Activated B cell treated with CpG ODN at 0.5 μM for 24 hours (primary cell): ENCODE measurements at regions of chr12 and their contacts with region 1.

Region 1: DNA sequence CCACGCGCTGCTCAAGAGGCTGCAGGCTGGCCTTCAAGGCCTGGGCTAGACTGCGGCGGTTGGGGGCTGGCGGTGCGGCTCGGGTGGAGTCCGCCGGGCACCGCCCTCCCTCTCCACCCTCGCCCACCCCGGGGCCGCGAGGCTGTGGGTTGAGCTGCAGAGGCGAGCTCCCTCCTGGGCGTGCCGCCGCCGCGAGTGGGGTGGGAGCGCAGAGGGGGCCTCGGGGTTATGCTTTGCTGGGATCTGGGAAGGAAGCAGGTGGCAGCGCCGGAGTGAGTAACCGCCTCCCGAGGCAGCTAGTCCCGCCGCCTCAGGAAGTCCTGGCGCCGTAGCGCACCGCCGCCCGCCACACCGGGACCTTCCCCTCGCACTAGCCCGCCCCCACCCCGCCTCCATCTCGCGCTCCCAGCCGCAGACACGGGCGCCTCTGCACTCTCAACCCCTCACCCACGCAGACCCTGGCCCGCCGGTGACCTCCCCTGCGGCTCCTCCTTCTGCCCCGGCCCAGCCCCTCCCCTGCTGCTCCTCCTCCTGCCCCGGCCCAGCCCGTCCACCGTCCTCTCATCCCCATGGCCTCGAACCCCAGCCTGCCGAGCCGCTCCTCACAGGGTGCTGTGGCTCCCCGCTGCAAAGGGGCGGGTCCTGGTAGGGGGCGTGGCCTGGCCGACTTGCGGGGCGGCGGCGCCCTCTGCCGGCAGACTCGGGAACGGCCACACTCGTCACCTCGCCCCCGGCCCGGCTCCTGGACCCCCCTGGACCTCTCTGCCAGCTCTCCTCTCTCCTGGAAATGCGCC is 16.6 kb downstream of the TAMALIN start:
- DNase-seq: peak; percentile 92
- ATAC-seq: peak; percentile 63
- H3K4me3 Mint-ChIP-seq: peak overlapping the region; percentile 81
- H3K27ac Mint-ChIP-seq: no peak overlapping the region
- H3K4me1 Mint-ChIP-seq: peaks cover 57% of the 10 kb centered on the region
- H3K27me3 Mint-ChIP-seq: no peaks in the 10 kb centered on the region
- CTCF ChIP-seq: peak; percentile 86

Region 2: DNA sequence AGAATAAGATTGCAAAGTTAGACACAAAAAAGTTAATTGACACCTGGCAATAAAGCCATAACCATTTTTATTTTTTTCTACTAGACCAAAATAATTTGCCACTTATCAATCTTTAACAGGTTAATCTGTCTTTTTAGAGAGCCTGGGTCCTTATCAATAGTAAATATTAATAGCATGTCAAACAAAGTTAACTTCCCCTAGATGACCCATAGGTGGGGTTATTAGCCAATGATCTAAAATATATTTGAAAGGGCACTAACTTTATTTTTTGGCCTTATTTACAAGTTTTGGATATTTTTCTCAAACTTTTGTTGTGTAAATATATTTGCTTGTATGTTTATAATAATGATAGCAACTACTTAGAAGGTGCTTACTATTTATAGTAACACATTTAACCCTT is 131.5 kb before region 1 on chr12:
- CTCF ChIA-PET with region 1: interaction called, 3 read pairs
- POLR2A ChIA-PET with region 1: no interaction called
- intact Hi-C with region 1: loop called (anchors 2 kb)
- DNase-seq: no peak
- ATAC-seq: no peak
- H3K4me3 Mint-ChIP-seq: no peak overlapping the region
- H3K27ac Mint-ChIP-seq: no peak overlapping the region
- H3K4me1 Mint-ChIP-seq: peaks cover 3% of the 10 kb centered on the region
- H3K27me3 Mint-ChIP-seq: peaks cover 13% of the 10 kb centered on the region
- CTCF ChIP-seq: no peak

Region 3: GRCh38 chr12:52004042-52004648 is 19.2 kb before region 1 on chr12:
- CTCF ChIA-PET with region 1: interaction called, 306 read pairs
- POLR2A ChIA-PET with region 1: interaction called, 217 read pairs
- intact Hi-C with region 1: loop called (anchors 1 kb)
- DNase-seq: no peak
- ATAC-seq: no peak
- H3K4me3 Mint-ChIP-seq: no peak overlapping the region
- H3K27ac Mint-ChIP-seq: no peak overlapping the region
- H3K4me1 Mint-ChIP-seq: peaks cover 39% of the 10 kb centered on the region
- H3K27me3 Mint-ChIP-seq: no peaks in the 10 kb centered on the region
- CTCF ChIP-seq: no peak

Region 4: DNA sequence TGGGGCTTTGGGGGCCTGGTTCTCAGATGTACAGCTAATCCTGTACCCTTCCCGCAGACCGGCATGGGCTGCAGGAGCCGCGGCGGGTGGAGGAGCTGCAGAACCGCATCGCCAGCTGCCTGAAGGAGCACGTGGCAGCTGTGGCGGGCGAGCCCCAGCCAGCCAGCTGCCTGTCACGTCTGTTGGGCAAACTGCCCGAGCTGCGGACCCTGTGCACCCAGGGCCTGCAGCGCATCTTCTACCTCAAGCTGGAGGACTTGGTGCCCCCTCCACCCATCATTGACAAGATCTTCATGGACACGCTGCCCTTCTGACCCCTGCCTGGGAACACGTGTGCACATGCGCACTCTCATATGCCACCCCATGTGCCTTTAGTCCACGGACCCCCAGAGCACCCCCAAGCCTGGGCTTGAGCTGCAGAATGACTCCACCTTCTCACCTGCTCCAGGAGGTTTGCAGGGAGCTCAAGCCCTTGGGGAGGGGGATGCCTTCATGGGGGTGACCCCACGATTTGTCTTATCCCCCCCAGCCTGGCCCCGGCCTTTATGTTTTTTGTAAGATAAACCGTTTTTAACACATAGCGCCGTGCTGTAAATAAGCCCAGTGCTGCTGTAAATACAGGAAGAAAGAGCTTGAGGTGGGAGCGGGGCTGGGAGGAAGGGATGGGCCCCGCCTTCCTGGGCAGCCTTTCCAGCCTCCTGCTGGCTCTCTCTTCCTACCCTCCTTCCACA is 35.4 kb after region 1 on chr12:
- CTCF ChIA-PET with region 1: interaction called, 16 read pairs
- POLR2A ChIA-PET with region 1: interaction called, 3 read pairs
- intact Hi-C with region 1: no loop called
- DNase-seq: no peak
- ATAC-seq: no peak
- H3K4me3 Mint-ChIP-seq: no peak overlapping the region
- H3K27ac Mint-ChIP-seq: no peak overlapping the region
- H3K4me1 Mint-ChIP-seq: peaks cover 2% of the 10 kb centered on the region
- H3K27me3 Mint-ChIP-seq: no peaks in the 10 kb centered on the region
- CTCF ChIP-seq: no peak

Region 5: DNA sequence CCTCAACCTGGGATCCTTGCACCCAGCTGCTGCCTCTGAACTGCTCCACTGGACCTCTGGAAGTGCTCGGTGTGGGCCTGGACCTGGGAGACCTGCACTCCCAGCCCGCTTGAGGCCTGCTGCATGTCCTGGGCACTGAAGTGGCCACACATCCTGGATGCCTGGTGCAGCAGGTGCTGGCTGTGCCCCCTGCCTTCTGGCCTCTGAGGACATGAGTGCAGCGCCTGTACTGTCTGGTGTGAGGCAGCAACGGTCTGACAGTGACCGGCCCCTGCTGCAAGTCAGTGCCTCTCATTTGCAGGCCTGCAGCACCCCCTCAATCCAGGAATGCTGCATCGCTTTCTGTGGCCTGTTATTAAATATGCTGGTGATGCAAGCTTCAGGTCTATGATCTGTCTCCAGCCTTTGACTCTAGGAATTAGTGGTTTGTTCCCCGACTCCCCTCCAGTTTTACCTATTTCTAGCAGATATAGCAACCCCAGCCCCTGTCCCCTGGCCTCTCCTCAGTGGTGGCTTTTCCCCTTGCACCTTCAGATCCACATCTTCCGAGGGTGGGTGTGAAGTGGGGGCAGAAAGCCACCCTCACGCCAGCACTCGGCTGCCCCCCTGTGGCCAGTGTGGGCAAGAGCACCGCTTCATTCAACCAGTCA is 59.7 kb after region 1 on chr12:
- CTCF ChIA-PET with region 1: interaction called, 342 read pairs
- POLR2A ChIA-PET with region 1: interaction called, 22 read pairs
- intact Hi-C with region 1: loop called (anchors 1 kb)
- DNase-seq: peak; percentile 70
- ATAC-seq: peak; percentile 63
- H3K4me3 Mint-ChIP-seq: peak overlapping the region; percentile 42
- H3K27ac Mint-ChIP-seq: peak overlapping the region; percentile 48
- H3K4me1 Mint-ChIP-seq: peaks cover 42% of the 10 kb centered on the region
- H3K27me3 Mint-ChIP-seq: peaks cover 8% of the 10 kb centered on the region
- CTCF ChIP-seq: peak; percentile 98

Region 6: GRCh38 chr12:52151859-52152783 is 128.7 kb after region 1 on chr12:
- CTCF ChIA-PET with region 1: no interaction called
- POLR2A ChIA-PET with region 1: no interaction called
- intact Hi-C with region 1: no loop called
- DNase-seq: peak; percentile 54
- ATAC-seq: peak; percentile 81
- H3K4me3 Mint-ChIP-seq: no peak overlapping the region
- H3K27ac Mint-ChIP-seq: no peak overlapping the region
- H3K4me1 Mint-ChIP-seq: peaks cover 6% of the 10 kb centered on the region
- H3K27me3 Mint-ChIP-seq: peaks cover 23% of the 10 kb centered on the region
- CTCF ChIP-seq: peak; percentile 52

Region 7: DNA sequence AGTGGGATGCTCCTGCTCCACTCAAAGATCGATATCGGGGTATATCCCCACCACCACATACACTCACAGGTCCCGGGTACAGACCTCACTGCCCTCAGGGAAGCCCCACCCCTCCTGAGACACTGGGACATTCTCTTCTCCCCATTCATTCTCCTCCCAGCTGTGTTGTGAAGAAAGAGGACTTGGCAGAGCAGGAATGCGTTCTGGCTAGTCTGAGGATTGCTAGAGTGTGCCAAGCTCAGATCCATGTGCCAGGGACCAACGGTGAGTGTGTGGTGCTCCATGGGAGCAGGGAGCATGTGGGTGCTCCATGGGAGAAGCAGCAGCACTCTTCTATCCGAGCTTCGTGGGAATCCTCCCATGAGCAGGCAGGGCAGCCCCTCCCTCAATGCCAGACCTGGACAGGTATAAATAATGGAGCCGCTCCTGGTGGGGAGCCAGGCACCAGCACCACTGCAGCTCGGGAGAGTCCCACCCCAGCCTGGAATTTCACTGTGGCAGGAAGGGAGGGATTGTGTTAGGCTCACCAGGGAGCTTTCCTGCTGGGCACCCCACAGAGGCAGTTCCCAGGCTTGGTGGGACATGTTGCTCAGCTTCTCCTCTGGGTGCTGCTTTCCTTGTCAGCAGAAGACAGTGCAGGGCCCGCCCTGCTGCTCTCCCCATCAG is 499.1 kb after region 1 on chr12:
- CTCF ChIA-PET with region 1: no interaction called
- POLR2A ChIA-PET with region 1: no interaction called
- intact Hi-C with region 1: no loop called
- DNase-seq: no peak
- ATAC-seq: no peak
- H3K4me3 Mint-ChIP-seq: no peak overlapping the region
- H3K27ac Mint-ChIP-seq: no peak overlapping the region
- H3K4me1 Mint-ChIP-seq: no peaks in the 10 kb centered on the region
- H3K27me3 Mint-ChIP-seq: peaks cover 2% of the 10 kb centered on the region
- CTCF ChIP-seq: no peak